ENCODE measurements at regions of chr2 and their contacts with region 1.

Region 1: DNA sequence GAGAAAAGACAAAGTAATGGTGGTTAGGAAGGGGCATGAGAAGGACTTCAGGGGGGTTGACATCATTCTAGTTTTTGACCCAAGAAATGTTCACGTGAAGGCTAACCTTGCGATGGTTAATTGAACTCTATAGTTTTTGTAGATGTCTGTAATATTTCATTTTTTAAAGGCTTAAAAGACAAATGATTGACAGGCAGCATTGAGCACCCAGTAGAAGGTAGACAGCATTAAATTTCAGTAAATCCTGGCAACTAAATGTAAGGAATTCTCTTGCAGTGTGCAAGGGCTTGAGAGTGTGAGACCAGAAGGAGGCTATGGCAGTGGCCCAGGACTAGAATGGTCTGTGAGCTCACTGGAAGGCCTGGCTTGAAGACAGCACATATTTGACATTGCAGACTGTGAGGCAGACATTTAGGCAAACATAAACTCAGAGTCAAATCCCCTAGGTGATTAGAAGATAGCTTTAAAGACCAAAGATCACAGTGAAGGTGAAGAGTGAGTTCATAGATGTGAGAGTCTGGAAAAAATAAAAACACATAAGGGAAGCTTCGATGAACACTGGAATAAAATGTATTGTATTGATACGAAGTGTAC is 100.1 kb upstream of the MAP4K4 start:
- DNase-seq: no peak
- H3K4me3 ChIP-seq: no peak overlapping the region
- H3K27ac ChIP-seq: no peak overlapping the region
- H3K4me1 ChIP-seq: no peaks in the 10 kb centered on the region
- H3K27me3 ChIP-seq: no peaks in the 10 kb centered on the region
- CTCF ChIP-seq: no peak

Region 2: GRCh38 chr2:101463891-101464641 is 133.4 kb before region 1 on chr2:
- CTCF ChIA-PET with region 1: no interaction called
- POLR2A ChIA-PET with region 1: no interaction called
- intact Hi-C with region 1: no loop called
- DNase-seq: no peak
- H3K4me3 ChIP-seq: no peak overlapping the region
- H3K27ac ChIP-seq: no peak overlapping the region
- H3K4me1 ChIP-seq: no peaks in the 10 kb centered on the region
- H3K27me3 ChIP-seq: no peaks in the 10 kb centered on the region
- CTCF ChIP-seq: no peak

Region 3: GRCh38 chr2:101571951-101572350 is 25.5 kb before region 1 on chr2:
- CTCF ChIA-PET with region 1: no interaction called
- POLR2A ChIA-PET with region 1: interaction called, 24 read pairs
- intact Hi-C with region 1: no loop called
- DNase-seq: no peak
- H3K4me3 ChIP-seq: no peak overlapping the region
- H3K27ac ChIP-seq: no peak overlapping the region
- H3K4me1 ChIP-seq: peaks cover 5% of the 10 kb centered on the region
- H3K27me3 ChIP-seq: no peaks in the 10 kb centered on the region
- CTCF ChIP-seq: no peak

Region 4: GRCh38 chr2:101717071-101717845 is 119.8 kb after region 1 on chr2:
- CTCF ChIA-PET with region 1: no interaction called
- POLR2A ChIA-PET with region 1: interaction called, 15 read pairs
- intact Hi-C with region 1: no loop called
- DNase-seq: no peak
- H3K4me3 ChIP-seq: no peak overlapping the region
- H3K27ac ChIP-seq: no peak overlapping the region
- H3K4me1 ChIP-seq: 0 out of 2 replicates have a peak, but pooled peaks cover 18% of the 10 kb centered on the region
- H3K27me3 ChIP-seq: no peaks in the 10 kb centered on the region
- CTCF ChIP-seq: no peak